GM10248 (cell line): ENCODE measurements at regions of chr6 and their contacts with region 1.

Region 1: DNA sequence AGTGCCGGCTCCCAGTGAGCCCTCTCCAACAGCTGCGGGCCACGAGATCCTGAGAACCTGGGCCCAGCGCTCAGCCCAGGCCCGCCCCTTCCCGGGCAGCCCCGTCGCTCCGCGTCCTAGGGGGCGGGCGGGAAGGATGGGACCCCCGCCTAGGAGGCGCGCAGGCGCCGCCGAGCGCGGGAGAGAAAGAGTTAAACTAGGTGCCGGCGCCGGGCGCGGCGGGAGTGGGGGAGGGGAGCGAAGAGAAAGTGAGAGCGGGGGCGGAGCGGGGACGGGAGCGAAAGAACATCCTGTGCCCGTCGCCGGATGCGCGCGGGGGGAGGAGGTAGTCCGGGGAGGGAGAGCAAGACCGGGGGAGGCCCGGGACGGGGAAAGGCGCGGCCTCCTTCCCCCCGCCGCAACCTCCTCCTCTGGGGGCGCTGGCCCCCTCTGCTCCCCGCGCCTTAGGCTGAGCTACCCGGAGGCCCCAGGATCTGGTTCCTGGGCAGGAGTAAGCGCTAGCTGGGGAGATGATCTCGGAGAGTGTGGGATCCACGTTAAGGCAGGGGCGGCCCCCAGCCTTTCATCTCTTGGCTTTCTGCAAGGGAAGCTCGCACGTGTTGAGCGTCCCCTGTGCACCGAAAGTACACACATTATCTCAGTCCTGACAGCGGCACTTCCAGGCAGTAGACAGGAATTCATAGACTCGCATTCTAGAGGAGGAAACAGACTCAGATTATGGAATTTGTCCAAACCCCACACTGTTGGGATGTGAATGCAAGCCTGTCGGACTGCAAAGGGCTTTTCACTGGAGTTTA is 4.9 kb upstream of the ARMC12 start:
- DNase-seq: peak; percentile 91
- CTCF ChIP-seq: no peak

Region 2: GRCh38 chr6:35562053-35562452 is 169.9 kb before region 1 on chr6:
- CTCF ChIA-PET with region 1: interaction called, 20 read pairs
- POLR2A ChIA-PET with region 1: no interaction called
- DNase-seq: no peak
- CTCF ChIP-seq: no peak

Region 3: DNA sequence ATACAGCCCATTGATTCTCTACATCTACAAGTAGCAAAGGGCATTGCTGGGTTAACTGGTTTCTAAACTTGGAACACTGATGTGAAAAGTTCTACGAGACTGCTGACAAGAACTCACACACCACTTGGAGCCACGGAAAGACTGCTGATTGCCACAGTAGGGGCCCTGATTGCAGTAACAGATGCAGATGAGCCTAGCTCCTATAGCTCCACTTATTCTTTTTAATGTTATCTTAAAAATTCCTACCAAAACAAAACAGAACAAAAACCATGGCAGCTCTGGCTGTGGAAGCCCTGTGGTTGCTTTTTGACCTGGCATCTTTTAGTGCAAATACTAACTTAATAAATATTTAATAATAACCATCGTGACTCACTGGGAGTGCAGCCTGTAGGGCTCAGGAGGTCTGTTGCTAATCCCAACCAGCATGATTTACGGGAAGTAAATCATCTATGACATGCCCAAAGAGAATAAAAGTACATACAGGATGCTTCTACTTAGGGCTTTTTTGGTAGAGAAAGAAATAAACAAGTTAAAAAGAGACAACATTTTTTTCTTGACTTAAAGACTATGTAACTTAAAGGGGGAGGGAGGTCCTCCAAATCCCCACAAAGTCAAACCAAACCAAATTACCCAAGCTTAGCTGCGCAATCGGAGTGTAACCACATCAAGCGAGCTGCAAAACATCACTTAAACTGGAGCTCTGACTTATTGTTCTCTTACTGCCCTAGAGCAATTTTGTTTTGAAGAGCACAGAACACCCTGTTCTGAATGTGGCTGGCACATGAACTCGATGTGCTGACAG is 130.4 kb before region 1 on chr6:
- CTCF ChIA-PET with region 1: interaction called, 37 read pairs
- POLR2A ChIA-PET with region 1: no interaction called
- DNase-seq: peak; percentile 15
- CTCF ChIP-seq: no peak

Region 4: DNA sequence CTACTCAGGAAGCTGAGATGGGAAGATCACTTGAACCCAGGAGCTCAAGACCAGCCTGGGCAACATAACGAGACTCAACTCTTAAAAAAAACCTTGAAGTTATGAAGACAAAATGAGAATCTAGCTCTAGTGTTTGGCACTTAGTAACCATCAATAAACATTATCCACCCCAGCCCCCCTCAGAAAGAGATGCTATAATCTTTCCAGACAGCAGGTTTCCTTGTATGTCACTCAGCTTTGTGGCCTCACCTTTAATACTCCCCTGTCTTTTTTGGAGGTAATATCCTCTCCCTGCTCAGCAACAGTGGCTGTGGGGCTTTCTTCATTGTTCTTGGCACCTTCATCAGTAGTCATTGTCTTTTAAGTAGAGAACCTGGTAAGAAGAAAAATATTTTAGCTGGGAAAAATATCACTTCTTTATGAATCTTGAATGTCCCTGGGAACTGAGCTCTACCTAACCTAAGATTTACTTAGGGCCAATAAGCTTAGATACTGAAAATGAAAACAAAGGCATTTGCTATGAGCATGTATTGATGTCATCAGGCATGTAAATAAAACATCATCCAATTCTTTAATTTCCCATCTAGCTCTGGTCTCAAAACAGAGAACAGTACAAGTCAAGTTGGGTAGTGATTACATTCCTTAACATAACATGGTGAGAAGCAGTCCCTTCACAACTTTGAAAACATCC is 89.3 kb before region 1 on chr6:
- CTCF ChIA-PET with region 1: interaction called, 25 read pairs
- POLR2A ChIA-PET with region 1: no interaction called
- DNase-seq: no peak
- CTCF ChIP-seq: no peak

Region 5: GRCh38 chr6:35681298-35681697 is 50.6 kb before region 1 on chr6:
- CTCF ChIA-PET with region 1: interaction called, 13 read pairs
- POLR2A ChIA-PET with region 1: no interaction called
- DNase-seq: no peak
- CTCF ChIP-seq: no peak

Region 6: DNA sequence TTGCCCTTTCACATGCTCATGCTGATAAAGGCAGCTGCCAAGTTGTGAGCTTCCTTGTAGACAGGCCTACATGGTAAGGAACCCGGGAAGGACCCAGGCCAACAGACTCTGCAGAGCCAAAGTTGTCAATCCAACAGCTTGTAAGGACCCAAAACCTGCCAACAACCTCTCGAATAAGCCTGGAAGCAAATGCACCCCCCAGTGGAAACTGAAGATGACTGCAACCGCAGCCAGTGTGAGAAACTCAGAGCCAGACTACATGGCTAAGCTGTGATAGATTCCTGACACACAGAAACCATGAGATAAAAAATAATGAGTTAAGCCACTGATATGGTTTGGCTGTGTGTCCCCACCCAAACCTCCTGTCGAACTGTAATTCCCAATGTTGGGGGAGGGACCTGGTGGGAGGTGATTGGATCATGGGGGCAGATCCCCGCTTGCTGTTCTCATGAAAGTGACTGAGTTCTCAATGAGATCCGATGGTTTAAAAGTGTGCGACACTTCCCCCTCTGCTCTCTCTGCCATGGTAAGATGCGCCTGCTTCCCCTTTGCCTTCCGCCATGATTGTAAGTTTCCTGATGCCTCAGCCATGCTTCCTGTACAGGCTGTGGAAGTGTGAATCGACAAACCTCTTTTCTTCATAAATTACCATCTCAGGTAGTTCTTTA is 25.7 kb after region 1 on chr6:
- CTCF ChIA-PET with region 1: interaction called, 67 read pairs
- POLR2A ChIA-PET with region 1: no interaction called
- DNase-seq: peak; percentile 68
- CTCF ChIP-seq: peak; percentile 48

Region 7: DNA sequence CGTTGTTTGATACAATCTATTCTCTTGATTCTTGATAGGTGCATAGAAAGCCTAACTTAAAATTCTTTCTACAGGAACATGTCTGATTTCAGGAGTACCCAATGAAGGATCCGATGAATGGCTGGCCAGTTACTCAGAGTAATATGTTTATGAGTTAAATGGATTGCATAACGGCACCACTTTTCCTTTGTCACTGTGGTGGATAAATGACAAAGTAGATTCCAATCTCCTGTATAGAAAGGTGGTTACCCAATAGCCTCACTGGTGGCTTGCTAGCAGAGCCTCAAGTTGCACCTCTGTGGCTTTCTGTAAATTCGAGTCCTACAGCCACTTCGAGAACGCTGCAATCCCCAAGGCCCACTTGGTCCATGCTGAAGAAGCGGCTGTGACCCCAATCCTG is 101.6 kb after region 1 on chr6:
- CTCF ChIA-PET with region 1: no interaction called
- POLR2A ChIA-PET with region 1: no interaction called
- DNase-seq: no peak
- CTCF ChIP-seq: no peak

Region 8: DNA sequence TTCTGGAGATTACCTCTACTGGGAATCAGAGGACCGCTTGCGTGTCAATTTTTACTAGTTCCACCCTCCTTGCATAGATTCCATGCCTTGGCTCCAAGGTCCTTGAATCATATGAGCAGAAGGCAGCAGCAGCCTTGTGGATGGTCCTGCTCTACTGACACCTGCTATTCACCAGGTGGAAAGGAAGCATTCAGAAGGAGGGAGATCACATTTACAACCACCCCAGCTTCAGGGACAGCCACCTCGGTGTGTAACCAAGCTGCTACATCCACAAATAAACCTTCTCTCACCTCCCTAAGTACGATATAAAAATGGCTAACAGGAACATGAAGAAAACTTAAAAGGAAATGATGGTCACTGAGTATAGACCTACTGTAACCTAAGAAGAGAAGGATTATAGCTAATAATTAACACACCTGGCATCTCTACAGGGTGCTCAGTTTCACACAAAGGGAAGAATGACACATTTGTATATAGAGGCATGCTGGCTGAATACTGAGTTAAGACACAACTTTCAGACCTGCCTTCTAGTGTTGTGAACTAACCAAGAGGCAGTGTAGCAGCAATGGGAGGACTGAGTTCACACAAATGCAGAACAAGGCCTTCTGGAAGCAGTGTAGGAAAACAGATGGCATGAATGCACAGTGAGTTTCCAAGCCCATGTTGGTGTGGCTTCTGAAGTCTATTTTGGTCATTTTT is 235.3 kb after region 1 on chr6:
- CTCF ChIA-PET with region 1: no interaction called
- POLR2A ChIA-PET with region 1: no interaction called
- DNase-seq: no peak
- CTCF ChIP-seq: no peak